Calu3 (cell line): ENCODE measurements at regions of chr12 and their contacts with region 1.

Region 1: GRCh38 chr12:50825372-50825838 is 17.3 kb upstream of the TMPRSS12 start:
- DNase-seq: no peak
- H3K4me3 Mint-ChIP-seq: no peak overlapping the region
- H3K27ac Mint-ChIP-seq: peak overlapping the region; percentile 70
- H3K4me1 Mint-ChIP-seq: no peaks in the 10 kb centered on the region
- H3K27me3 Mint-ChIP-seq: no peaks in the 10 kb centered on the region
- CTCF ChIP-seq: peak; percentile 26

Region 2: DNA sequence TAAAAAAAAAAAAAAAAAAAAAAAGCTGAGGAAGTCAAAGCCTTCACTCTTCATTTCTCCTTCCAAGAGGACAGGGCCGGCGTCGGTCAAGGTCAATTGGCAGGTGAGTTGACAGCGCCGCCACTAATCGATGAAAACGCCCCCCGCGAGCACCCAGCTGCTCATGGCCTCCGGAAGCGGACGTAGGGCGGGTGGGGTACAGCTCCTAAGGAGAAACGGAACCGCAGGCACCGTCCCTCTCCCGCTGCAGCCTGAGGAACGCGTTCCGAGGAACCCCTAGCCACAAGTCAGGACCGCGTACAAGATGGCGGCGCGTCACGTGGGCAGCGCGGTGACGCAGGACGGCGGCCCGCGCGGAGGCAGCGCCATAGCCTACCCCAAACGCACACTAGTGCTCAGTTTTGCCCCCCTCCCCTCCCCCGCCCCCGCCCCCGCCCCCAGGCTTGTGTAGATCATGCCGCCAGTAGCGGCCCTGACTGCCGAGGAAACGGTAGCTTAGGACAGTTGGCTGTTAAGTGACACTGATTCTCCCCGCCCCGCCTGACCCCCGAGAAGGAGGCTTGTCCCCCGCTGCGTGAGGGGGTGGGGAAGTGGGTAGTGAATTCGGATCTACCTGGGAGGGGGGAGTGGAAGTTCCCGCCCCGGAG is 61.6 kb before region 1 on chr12 and contains the start of gene ATF1:
- CTCF ChIA-PET with region 1: interaction called, 10 read pairs
- intact Hi-C with region 1: no loop called
- DNase-seq: peak; percentile 84
- H3K4me3 Mint-ChIP-seq: peak within 1 kb of the TSS; percentile 83
- H3K27ac Mint-ChIP-seq: peak within 1 kb of the TSS; percentile 88
- H3K4me1 Mint-ChIP-seq: peaks cover 21% of the 10 kb centered on the region
- H3K27me3 Mint-ChIP-seq: no peaks in the 10 kb centered on the region
- CTCF ChIP-seq: no peak
- total RNA-seq, gene ATF1: 22.9 and 23.4 TPM in 2 replicates

Region 3: GRCh38 chr12:50882563-50882962 is 57.2 kb after region 1 on chr12:
- CTCF ChIA-PET with region 1: no interaction called
- intact Hi-C with region 1: no loop called
- DNase-seq: no peak
- H3K4me3 Mint-ChIP-seq: no peak overlapping the region
- H3K27ac Mint-ChIP-seq: no peak overlapping the region
- H3K4me1 Mint-ChIP-seq: no peaks in the 10 kb centered on the region
- H3K27me3 Mint-ChIP-seq: no peaks in the 10 kb centered on the region
- CTCF ChIP-seq: no peak

Region 4: GRCh38 chr12:51025836-51026638 is 200.6 kb after region 1 on chr12 and contains the start of gene SLC11A2:
- CTCF ChIA-PET with region 1: interaction called, 6 read pairs
- intact Hi-C with region 1: loop called (anchors 2 kb)
- DNase-seq: peak; percentile 93
- H3K4me3 Mint-ChIP-seq: peak within 1 kb of the TSS; percentile 88
- H3K27ac Mint-ChIP-seq: peak within 1 kb of the TSS; percentile 91
- H3K4me1 Mint-ChIP-seq: peaks cover 25% of the 10 kb centered on the region
- H3K27me3 Mint-ChIP-seq: no peaks in the 10 kb centered on the region
- CTCF ChIP-seq: no peak
- total RNA-seq, gene SLC11A2: 49.5 and 51.3 TPM in 2 replicates